ENCODE measurements at regions of chrX and their contacts with region 1.

Region 1: DNA sequence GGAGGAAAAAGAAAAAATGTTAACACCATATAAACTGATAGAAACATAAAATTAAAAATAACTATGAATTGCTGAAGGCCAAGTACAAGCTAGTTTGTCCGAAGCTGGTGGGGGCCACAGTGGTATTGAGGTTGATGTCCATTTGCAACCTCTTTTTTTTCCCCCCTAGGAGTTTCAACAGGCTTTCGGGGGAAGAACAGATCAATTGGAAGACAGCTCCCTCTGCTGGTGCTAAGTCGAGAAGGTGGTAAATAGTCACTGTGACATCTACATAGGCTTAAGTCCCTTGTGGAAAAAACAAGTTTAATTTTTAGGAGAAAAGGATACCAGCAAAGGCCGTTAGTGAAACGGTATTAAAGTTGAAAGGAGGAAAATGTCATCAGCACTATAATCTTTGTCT is 115.7 kb upstream of the ZXDA start:
- DNase-seq: peak; percentile 17
- ATAC-seq: peak; percentile 60
- H3K4me3 ChIP-seq: no peak overlapping the region
- H3K27ac ChIP-seq: no peak overlapping the region
- H3K4me1 ChIP-seq: no peaks in the 10 kb centered on the region
- H3K27me3 ChIP-seq: no peaks in the 10 kb centered on the region
- CTCF ChIP-seq: peak; percentile 61
- EP300 ChIP-seq: no peak
- POLR2A ChIP-seq: no peak
- RAD21 ChIP-seq: no peak

Region 2: DNA sequence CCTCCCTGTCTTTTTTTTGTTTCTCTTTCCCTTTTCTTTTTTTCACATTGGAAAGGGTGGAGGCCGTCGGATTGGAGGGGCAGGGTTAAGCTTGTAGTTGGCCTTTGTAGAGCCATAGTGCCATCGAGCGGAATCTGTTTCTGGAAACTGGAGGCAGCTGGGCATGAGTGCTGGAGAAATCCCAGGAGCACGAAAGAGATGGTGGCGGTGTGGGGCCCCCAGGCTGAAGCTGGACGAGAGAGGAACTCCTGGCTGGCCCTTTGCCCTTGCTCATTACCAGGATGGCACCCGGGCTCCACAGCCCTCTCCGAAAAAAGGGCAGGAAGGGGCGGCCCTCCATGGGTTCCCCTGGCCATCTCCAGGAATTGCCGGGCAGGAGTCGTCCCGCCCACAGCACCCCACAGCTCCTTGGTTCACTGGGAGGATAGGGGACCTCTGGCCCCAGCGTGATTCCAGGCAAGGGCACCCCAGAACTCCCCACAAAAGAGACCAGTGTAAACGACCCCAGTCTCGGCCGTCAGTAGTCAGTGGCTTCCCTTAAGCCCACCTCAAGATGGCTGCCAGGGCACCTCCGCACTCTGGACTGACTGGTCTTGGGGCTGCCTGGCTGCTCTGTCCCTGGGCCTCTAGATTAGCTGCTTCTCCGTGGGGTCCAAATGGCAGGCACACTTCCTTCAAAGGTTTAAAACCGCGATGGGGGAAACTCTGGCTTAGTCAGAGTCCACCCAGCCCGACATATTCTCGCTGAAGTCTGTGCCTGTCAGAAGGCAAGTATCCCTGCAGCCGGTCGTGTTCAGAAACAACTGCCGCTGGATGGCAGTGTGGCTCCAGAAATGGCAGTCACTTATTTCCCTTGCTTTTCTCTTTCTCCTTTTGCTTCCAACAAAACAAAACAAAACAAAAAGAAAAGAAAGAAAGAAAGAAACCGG is 1222.8 kb before region 1 on chrX:
- CTCF ChIA-PET with region 1: no interaction called
- POLR2A ChIA-PET with region 1: no interaction called
- in situ Hi-C with region 1: no loop called
- intact Hi-C with region 1: loop called (anchors 5 kb)
- DNase-seq: peak; percentile 39
- ATAC-seq: peak; percentile 95
- H3K4me3 ChIP-seq: peak overlapping the region; percentile 53 to 70 (median 55); a peak in 5 of 6 replicates
- H3K27ac ChIP-seq: no peak overlapping the region
- H3K4me1 ChIP-seq: no peaks in the 10 kb centered on the region
- H3K27me3 ChIP-seq: no peaks in the 10 kb centered on the region
- CTCF ChIP-seq: peak; percentile 79
- EP300 ChIP-seq: no peak
- POLR2A ChIP-seq: no peak
- RAD21 ChIP-seq: peak; percentile 46; the same call in 1 of the 2 replicates

Region 3: GRCh38 chrX:57573754-57574153 is 452.2 kb before region 1 on chrX:
- CTCF ChIA-PET with region 1: no interaction called
- POLR2A ChIA-PET with region 1: no interaction called
- in situ Hi-C with region 1: no loop called
- intact Hi-C with region 1: loop called (anchors 10 kb)
- DNase-seq: no peak
- ATAC-seq: no peak; the same call in 2 of the 3 replicates
- H3K4me3 ChIP-seq: no peak overlapping the region
- H3K27ac ChIP-seq: no peak overlapping the region
- H3K4me1 ChIP-seq: no peaks in the 10 kb centered on the region
- H3K27me3 ChIP-seq: no peaks in the 10 kb centered on the region
- CTCF ChIP-seq: peak; percentile 64
- EP300 ChIP-seq: no peak
- POLR2A ChIP-seq: no peak
- RAD21 ChIP-seq: no peak

Region 4: DNA sequence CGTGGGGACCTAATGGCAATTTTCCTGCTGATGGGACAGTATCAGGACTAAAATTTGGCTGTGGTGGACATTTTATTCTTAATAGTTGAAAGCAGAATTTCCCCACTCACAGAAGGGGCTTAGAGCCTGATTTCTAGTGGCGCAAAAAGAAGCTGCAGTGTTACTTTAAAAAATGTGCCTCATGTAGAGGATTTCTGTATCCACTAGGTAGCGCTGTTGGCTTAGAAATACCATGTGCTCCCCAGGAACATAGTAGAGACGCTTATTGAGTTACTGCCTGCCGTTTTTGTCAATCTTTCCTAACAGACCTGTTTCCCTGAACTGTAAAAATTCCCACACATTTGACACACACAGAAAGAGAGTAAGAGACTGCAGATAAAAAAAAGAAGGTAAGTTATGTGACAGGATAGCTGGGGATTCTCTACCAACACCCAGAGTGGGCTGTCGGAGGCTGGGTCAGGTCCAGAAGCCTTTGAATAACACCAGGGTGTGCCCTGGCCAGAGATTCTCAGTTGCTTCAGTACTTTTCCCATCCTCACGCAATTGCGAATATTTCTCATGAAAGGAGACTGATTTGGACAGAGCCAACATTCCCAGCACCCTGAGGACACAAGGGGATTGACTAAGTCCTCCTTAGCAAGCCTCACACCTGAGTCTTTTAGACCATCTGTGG is 204.1 kb before region 1 on chrX:
- CTCF ChIA-PET with region 1: interaction called, 14 read pairs
- POLR2A ChIA-PET with region 1: no interaction called
- in situ Hi-C with region 1: loop called (anchors 25 kb)
- intact Hi-C with region 1: loop called (anchors 1 kb)
- DNase-seq: peak; percentile 43
- ATAC-seq: peak; percentile 89
- H3K4me3 ChIP-seq: no peak overlapping the region; a peak in 1 of 6 replicates
- H3K27ac ChIP-seq: no peak overlapping the region
- H3K4me1 ChIP-seq: no peaks in the 10 kb centered on the region
- H3K27me3 ChIP-seq: no peaks in the 10 kb centered on the region
- CTCF ChIP-seq: peak; percentile 69
- EP300 ChIP-seq: no peak
- POLR2A ChIP-seq: no peak
- RAD21 ChIP-seq: peak; percentile 40

Region 5: DNA sequence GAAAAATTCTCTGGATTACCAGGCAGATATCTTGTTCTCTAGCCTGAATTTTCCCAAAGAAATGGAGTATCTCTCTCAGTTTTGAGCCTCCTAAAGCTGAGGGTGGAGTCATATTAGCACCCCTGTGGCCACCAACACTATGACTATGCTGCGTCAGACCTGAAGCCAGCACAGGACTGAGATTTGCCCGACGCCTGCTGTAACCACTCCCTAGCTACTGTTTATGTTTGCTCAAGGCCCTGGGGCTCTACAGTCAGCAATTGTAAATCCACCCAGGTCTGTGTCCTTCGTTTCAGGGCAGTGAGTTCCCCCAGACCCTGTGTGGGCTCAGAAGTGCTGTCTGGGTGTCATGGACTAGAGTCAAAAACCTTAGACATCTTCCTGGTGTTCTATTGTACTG is 177.1 kb before region 1 on chrX:
- CTCF ChIA-PET with region 1: no interaction called
- POLR2A ChIA-PET with region 1: no interaction called
- in situ Hi-C with region 1: loop called (anchors 25 kb)
- intact Hi-C with region 1: no loop called
- DNase-seq: no peak
- ATAC-seq: no peak
- H3K4me3 ChIP-seq: no peak overlapping the region
- H3K27ac ChIP-seq: no peak overlapping the region
- H3K4me1 ChIP-seq: no peaks in the 10 kb centered on the region
- H3K27me3 ChIP-seq: no peaks in the 10 kb centered on the region
- CTCF ChIP-seq: no peak
- EP300 ChIP-seq: no peak
- POLR2A ChIP-seq: no peak
- RAD21 ChIP-seq: no peak

Region 6: DNA sequence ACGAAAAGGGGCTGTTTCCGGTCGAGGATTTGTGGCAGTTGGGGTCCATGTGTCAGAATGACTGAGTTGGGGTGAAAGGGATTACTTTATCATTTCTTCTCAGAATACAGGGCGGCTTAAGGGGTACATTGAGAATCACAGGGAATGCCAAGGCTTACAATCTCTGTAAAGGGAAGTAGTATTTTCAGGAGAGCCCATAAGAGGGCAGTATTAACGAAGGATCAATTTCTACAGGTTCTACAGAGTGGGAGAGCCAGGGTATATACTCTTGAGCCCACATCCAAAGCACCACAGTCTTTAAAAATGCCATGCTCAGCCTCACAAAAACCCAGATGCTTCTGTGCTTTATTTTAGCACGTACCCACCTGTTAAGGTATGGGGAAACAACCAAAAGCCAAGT is 48.0 kb before region 1 on chrX:
- CTCF ChIA-PET with region 1: no interaction called
- POLR2A ChIA-PET with region 1: no interaction called
- in situ Hi-C with region 1: no loop called
- intact Hi-C with region 1: loop called (anchors 2 kb)
- DNase-seq: peak; percentile 0
- ATAC-seq: peak; percentile 64; the same call in 2 of the 3 replicates
- H3K4me3 ChIP-seq: no peak overlapping the region
- H3K27ac ChIP-seq: no peak overlapping the region
- H3K4me1 ChIP-seq: no peaks in the 10 kb centered on the region
- H3K27me3 ChIP-seq: no peaks in the 10 kb centered on the region
- CTCF ChIP-seq: 0 out of 2 replicates have a peak, but pooled peaks have one; percentile 12
- EP300 ChIP-seq: no peak
- POLR2A ChIP-seq: no peak
- RAD21 ChIP-seq: no peak